ENCODE measurements at regions of chr13 and their contacts with region 1.

Region 1: GRCh38 chr13:80419416-80419815 is 78.5 kb upstream of the SPRY2 start:
- DNase-seq: no peak
- ATAC-seq: peak; percentile 63
- H3K4me3 ChIP-seq: no peak overlapping the region
- H3K27ac ChIP-seq: no peak overlapping the region
- H3K4me1 ChIP-seq: no peaks in the 10 kb centered on the region
- H3K27me3 ChIP-seq: no peaks in the 10 kb centered on the region
- CTCF ChIP-seq: no peak
- EP300 ChIP-seq: no peak
- POLR2A ChIP-seq: no peak
- RAD21 ChIP-seq: no peak

Region 2: DNA sequence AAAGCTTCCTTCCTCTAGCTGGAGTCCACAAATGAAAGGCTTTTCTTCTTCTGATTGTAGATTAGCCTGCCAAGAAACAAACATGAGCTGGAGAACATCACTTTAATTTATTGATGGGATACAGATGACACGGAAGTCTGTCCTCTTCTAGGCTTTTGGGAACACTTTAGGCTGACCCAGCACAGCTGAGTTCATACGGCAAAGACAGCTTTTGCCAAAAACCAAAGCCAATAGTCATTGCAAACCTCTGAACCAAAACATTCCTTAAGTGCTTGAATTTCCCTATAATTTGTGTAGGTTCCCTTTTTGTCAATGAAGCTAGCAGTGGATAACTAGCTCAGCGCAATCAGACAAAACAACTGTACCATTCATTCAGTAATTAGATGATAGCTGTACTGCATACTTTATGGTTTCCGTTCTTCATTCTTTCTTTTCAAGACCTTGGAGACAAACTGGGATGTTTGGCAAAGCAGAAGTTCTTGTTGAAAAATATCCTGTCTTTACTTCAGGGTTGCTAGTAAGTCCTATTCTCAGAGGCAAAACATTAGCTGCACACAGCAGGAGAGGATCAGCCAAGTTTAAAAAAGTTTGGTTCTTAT is 17.3 kb after region 1 on chr13:
- CTCF ChIA-PET with region 1: interaction called, 12 read pairs
- POLR2A ChIA-PET with region 1: interaction called, 5 read pairs
- RAD21 ChIA-PET with region 1: interaction called, 21 read pairs
- SMC1A ChIA-PET with region 1: interaction called, 707 read pairs
- in situ Hi-C with region 1: no loop called
- intact Hi-C with region 1: no loop called
- DNase-seq: no peak
- ATAC-seq: no peak
- H3K4me3 ChIP-seq: no peak overlapping the region
- H3K27ac ChIP-seq: no peak overlapping the region
- H3K4me1 ChIP-seq: no peaks in the 10 kb centered on the region
- H3K27me3 ChIP-seq: no peaks in the 10 kb centered on the region
- CTCF ChIP-seq: no peak
- EP300 ChIP-seq: no peak
- POLR2A ChIP-seq: no peak
- RAD21 ChIP-seq: no peak

Region 3: DNA sequence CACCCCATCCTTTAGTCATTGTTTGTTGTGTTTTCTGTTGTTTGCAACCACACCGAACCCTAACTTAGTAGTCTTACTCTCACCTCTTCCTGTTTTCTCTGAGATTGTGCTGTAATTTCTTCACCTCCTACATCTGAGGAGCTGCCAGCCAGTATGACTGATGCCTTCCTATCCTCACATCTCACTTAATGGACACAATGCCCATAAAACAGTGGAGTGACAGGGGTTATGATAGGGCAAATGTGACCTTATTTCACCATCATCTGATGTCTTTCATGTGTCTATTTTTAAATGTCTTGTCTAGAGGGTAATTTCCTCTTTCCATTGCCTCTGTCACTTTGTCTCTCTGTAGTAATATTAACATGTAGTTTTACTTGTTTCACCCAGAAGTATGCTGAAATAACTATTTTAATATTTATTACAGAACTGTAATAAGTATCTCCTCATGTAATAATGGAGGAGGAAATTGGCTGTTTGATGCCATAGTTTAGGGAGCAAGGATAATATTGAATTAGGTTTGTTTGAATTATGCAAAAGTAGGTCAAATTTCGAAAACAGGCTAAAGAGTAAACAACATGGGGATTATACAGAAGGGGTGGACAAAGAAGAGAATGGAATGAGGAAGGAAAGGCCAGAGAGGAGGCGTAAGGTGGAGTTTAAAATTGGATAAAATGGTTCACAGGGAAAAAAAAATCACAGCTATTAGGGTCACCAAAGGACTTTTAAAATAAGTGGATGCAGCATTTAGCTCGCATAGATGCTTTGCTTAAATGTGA is 25.0 kb after region 1 on chr13:
- CTCF ChIA-PET with region 1: interaction called, 5 read pairs
- POLR2A ChIA-PET with region 1: interaction called, 5 read pairs
- RAD21 ChIA-PET with region 1: interaction called, 15 read pairs
- SMC1A ChIA-PET with region 1: interaction called, 707 read pairs
- in situ Hi-C with region 1: no loop called
- intact Hi-C with region 1: no loop called
- DNase-seq: no peak
- ATAC-seq: peak; percentile 51
- H3K4me3 ChIP-seq: no peak overlapping the region
- H3K27ac ChIP-seq: no peak overlapping the region
- H3K4me1 ChIP-seq: no peaks in the 10 kb centered on the region
- H3K27me3 ChIP-seq: no peaks in the 10 kb centered on the region
- CTCF ChIP-seq: no peak
- EP300 ChIP-seq: no peak
- POLR2A ChIP-seq: no peak
- RAD21 ChIP-seq: no peak

Region 4: GRCh38 chr13:80562433-80563156 is 143.2 kb after region 1 on chr13:
- CTCF ChIA-PET with region 1: no interaction called
- POLR2A ChIA-PET with region 1: no interaction called
- RAD21 ChIA-PET with region 1: no interaction called
- SMC1A ChIA-PET with region 1: no interaction called
- in situ Hi-C with region 1: no loop called
- intact Hi-C with region 1: no loop called
- DNase-seq: no peak
- ATAC-seq: peak; percentile 42; the same call in 2 of the 3 replicates
- H3K4me3 ChIP-seq: no peak overlapping the region
- H3K27ac ChIP-seq: no peak overlapping the region
- H3K4me1 ChIP-seq: no peaks in the 10 kb centered on the region
- H3K27me3 ChIP-seq: no peaks in the 10 kb centered on the region
- CTCF ChIP-seq: no peak
- EP300 ChIP-seq: no peak
- POLR2A ChIP-seq: no peak
- RAD21 ChIP-seq: no peak